ENCODE measurements at regions of chr17 and their contacts with region 1.

Region 1: GRCh38 chr17:63425482-63425881 is 20.6 kb downstream of the CYB561 start:
- DNase-seq: peak; percentile 56
- ATAC-seq: peak; percentile 86
- H3K4me3 Mint-ChIP-seq: no peak overlapping the region
- H3K27ac Mint-ChIP-seq: no peak overlapping the region
- H3K4me1 Mint-ChIP-seq: peaks cover 8% of the 10 kb centered on the region
- H3K27me3 Mint-ChIP-seq: peaks cover 2% of the 10 kb centered on the region
- CTCF ChIP-seq: peak; percentile 96

Region 2: DNA sequence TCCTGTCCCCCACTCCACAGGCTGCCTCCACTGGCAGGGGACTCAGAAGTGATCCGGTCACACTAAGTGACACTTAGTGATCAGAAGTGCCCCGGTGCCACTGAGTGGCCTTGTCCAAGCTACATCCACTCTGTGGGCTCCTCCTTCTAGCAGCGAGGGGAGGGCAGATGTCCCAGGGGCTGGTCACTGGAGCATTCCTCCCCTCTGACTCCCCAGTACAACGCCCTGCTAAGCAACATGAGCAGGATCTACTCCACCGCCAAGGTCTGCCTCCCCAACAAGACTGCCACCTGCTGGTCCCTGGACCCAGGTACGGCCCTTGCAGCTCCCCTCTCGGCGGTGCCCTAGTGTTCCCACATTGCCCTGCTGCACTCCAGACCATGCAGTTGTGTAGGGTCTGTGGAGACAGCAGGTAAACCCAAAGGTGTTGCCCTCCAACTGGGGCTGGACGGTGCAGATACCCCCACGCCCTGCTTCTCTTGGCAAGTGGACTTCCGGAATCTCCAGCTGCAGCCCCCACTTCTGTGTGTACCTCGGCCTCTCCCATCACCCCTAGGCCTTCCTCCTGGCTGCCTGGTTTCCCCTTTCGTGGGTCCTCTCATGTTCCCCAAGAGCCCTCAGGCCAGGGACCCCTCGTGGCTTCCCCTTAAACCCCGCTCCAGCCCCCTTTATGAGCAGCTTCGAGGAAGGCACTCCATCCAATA is 53.5 kb after region 1 on chr17:
- CTCF ChIA-PET with region 1: interaction called, 155 read pairs
- POLR2A ChIA-PET with region 1: interaction called, 5 read pairs
- intact Hi-C with region 1: loop called (anchors 1 kb)
- DNase-seq: peak; percentile 59
- ATAC-seq: peak; percentile 80
- H3K4me3 Mint-ChIP-seq: peak overlapping the region; percentile 54
- H3K27ac Mint-ChIP-seq: no peak overlapping the region
- H3K4me1 Mint-ChIP-seq: peaks cover 17% of the 10 kb centered on the region
- H3K27me3 Mint-ChIP-seq: peaks cover 32% of the 10 kb centered on the region
- CTCF ChIP-seq: no peak

Region 3: DNA sequence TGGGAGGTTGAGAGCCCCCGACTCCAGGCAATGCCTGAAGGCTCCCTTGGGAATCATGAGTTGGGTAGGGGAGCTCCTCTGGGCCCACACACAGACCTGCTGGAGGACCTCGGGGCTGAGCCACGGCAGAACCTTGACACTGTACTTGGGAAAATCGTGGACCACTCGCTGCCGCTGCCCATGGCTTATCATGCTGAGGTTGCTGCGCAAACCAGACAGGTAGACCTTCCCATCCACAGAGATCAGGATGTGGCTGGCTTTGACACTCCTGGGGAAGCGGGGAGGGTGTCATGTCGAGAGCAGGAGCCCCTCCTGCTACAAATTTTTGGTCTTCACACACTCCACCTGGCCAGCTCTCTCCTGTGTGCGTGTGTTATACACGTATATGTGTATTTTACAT is 281.7 kb after region 1 on chr17:
- CTCF ChIA-PET with region 1: interaction called, 22 read pairs
- POLR2A ChIA-PET with region 1: no interaction called
- intact Hi-C with region 1: loop called (anchors 1 kb)
- DNase-seq: no peak
- ATAC-seq: no peak
- H3K4me3 Mint-ChIP-seq: no peak overlapping the region
- H3K27ac Mint-ChIP-seq: peak overlapping the region; percentile 71
- H3K4me1 Mint-ChIP-seq: peaks cover 60% of the 10 kb centered on the region
- H3K27me3 Mint-ChIP-seq: no peaks in the 10 kb centered on the region
- CTCF ChIP-seq: no peak

Region 4: DNA sequence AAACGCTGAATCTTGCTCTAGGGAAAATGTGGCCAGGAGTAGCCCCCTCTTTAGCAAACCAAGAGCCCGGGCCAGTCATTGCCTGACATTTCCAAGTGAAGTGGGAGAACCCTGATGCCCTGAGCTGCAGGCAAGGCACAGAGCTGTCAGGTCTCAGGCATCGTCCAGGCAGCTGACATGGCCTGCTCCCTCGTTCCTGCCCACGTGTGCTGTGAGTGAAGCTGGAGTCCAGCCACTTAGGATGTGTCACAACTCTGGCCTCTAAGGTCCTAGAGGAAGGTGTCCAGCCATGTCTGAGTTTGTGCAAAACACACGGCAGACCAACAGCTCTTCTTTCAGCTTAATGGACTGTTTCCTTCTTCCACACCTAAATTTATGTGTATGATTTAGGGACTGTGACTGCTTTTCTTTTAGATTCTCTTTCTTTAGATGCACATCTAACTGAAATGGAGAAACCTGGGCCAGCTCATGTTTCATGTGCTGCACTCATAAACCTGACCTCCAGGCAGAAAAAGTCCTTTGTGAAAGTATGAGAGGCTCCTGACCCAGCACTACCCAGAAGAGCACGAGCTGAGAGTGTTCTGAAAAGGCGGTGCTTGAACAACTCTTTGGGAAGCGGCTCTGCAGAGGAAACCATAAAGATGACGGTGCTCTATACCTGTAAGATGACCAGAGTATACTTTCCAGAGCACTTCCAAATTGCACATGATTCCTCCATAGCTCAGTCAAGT is 289.2 kb after region 1 on chr17:
- CTCF ChIA-PET with region 1: interaction called, 22 read pairs
- POLR2A ChIA-PET with region 1: no interaction called
- intact Hi-C with region 1: loop called (anchors 1 kb)
- DNase-seq: no peak
- ATAC-seq: no peak
- H3K4me3 Mint-ChIP-seq: no peak overlapping the region
- H3K27ac Mint-ChIP-seq: no peak overlapping the region
- H3K4me1 Mint-ChIP-seq: peaks cover 7% of the 10 kb centered on the region
- H3K27me3 Mint-ChIP-seq: no peaks in the 10 kb centered on the region
- CTCF ChIP-seq: no peak

Region 5: GRCh38 chr17:63834431-63835166 is 409.1 kb after region 1 on chr17:
- CTCF ChIA-PET with region 1: no interaction called
- POLR2A ChIA-PET with region 1: no interaction called
- intact Hi-C with region 1: loop called (anchors 1 kb)
- DNase-seq: no peak
- ATAC-seq: peak; percentile 88
- H3K4me3 Mint-ChIP-seq: no peak overlapping the region
- H3K27ac Mint-ChIP-seq: peak overlapping the region; percentile 65
- H3K4me1 Mint-ChIP-seq: peaks cover 56% of the 10 kb centered on the region
- H3K27me3 Mint-ChIP-seq: no peaks in the 10 kb centered on the region
- CTCF ChIP-seq: no peak